ENCODE measurements at regions of chr2 and their contacts with region 1.

Region 1: GRCh38 chr2:86440631-86441391 is at the start of gene KDM3A:
- DNase-seq: peak; percentile 100
- H3K4me3 Mint-ChIP-seq: peak within 1 kb of the TSS; percentile 92
- H3K27ac Mint-ChIP-seq: peak within 1 kb of the TSS; percentile 100
- H3K4me1 Mint-ChIP-seq: peaks cover 37% of the 10 kb centered on the region
- H3K27me3 Mint-ChIP-seq: no peaks in the 10 kb centered on the region
- total RNA-seq, gene KDM3A: 47.3 to 49.9 TPM

Region 2: GRCh38 chr2:85595301-85596025 is 845.3 kb before region 1 on chr2 and contains the start of gene RNF181:
- CTCF ChIA-PET with region 1: no interaction called
- intact Hi-C with region 1: no loop called
- DNase-seq: peak; percentile 96
- H3K4me3 Mint-ChIP-seq: peak within 1 kb of the TSS; percentile 97
- H3K27ac Mint-ChIP-seq: peak within 1 kb of the TSS; percentile 92
- H3K4me1 Mint-ChIP-seq: peaks cover 31% of the 10 kb centered on the region
- H3K27me3 Mint-ChIP-seq: no peaks in the 10 kb centered on the region
- total RNA-seq, gene RNF181: 86.8 to 96.1 TPM

Region 3: DNA sequence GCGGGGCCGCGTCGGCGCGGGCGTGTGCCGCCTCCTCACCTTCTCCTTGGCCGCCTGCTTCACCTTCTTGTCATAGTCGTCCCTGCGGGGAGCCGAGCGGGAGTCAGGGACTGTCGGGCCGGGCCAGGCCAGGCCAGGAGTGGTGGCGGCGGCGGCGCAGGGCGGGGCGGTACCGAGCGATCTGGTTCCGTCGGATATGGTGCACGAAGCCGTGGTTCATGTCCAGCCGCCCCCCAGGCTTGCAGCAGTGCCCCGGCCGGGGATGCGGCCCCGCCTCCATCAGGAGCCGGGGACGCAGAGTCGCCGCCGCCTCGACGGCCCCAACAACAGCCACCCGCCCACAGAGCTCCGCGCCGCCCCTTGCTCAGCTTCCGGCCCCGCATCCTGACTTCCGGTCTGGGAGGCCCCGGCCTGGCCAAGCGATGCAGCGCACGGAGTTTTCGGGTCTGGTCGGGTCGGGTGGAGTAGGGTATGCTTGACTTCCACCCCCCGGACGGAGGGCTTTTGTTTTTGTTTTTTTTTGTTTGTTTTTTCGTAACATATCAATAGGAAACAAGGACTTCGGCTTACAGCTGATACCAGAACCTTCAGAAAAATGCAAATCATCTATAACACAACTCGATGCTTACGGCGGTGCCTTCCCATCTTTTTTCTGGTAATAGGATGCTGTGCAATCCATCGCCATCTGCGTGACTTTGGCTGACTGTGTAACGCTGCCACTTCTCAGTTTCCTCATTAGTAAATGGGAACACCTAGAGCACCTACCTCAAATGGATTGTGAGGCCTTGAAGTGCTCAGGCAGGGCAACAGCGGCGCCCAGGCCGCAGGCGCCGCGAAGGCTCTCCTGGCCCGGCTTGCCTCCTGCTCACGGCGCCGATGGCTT is 828.9 kb before region 1 on chr2 and contains the start of gene C2orf68:
- CTCF ChIA-PET with region 1: no interaction called
- intact Hi-C with region 1: loop called (anchors 10 kb)
- DNase-seq: peak; percentile 93
- H3K4me3 Mint-ChIP-seq: peak within 1 kb of the TSS; percentile 98
- H3K27ac Mint-ChIP-seq: peak within 1 kb of the TSS; percentile 94
- H3K4me1 Mint-ChIP-seq: peaks cover 25% of the 10 kb centered on the region
- H3K27me3 Mint-ChIP-seq: no peaks in the 10 kb centered on the region
- total RNA-seq, gene C2orf68: 29.3 to 31.0 TPM

Region 4: GRCh38 chr2:86105252-86105968 is 335.4 kb before region 1 on chr2 and contains the start of gene POLR1A:
- CTCF ChIA-PET with region 1: no interaction called
- intact Hi-C with region 1: loop called (anchors 1 kb)
- DNase-seq: peak; percentile 87
- H3K4me3 Mint-ChIP-seq: peak within 1 kb of the TSS; percentile 89
- H3K27ac Mint-ChIP-seq: peak within 1 kb of the TSS; percentile 99
- H3K4me1 Mint-ChIP-seq: peaks cover 57% of the 10 kb centered on the region
- H3K27me3 Mint-ChIP-seq: no peaks in the 10 kb centered on the region
- total RNA-seq, gene POLR1A: 25.3 to 27.1 TPM

Region 5: GRCh38 chr2:86368161-86368824 is 72.5 kb before region 1 on chr2:
- CTCF ChIA-PET with region 1: interaction called, 4 read pairs
- intact Hi-C with region 1: loop called (anchors 1 kb)
- DNase-seq: peak; percentile 46
- H3K4me3 Mint-ChIP-seq: peak overlapping the region; percentile 66
- H3K27ac Mint-ChIP-seq: peak overlapping the region; percentile 64
- H3K4me1 Mint-ChIP-seq: peaks cover 48% of the 10 kb centered on the region
- H3K27me3 Mint-ChIP-seq: no peaks in the 10 kb centered on the region

Region 6: DNA sequence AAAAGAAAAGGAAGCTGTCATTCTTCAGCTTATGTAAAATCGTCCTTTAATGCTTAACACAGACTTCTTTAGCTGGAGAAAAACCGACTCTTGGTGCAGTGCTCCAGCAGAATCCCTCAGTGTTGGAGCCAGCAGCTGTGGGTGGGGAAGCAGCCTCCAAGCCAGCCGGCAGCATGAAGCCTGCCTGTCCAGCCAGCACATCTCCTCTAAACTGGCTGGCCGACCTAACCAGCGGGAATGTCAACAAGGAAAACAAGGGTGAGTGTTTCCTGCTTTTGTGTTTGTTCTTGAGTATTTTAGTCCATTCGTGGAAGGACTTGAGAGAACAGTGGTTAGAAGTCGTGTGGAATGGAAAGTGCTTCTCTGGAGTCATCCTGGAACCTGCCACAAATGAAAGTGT is 39.3 kb after region 1 on chr2:
- CTCF ChIA-PET with region 1: no interaction called
- intact Hi-C with region 1: loop called (anchors 1 kb)
- DNase-seq: no peak
- H3K4me3 Mint-ChIP-seq: no peak overlapping the region
- H3K27ac Mint-ChIP-seq: no peak overlapping the region
- H3K4me1 Mint-ChIP-seq: peaks cover 50% of the 10 kb centered on the region
- H3K27me3 Mint-ChIP-seq: no peaks in the 10 kb centered on the region

Region 7: DNA sequence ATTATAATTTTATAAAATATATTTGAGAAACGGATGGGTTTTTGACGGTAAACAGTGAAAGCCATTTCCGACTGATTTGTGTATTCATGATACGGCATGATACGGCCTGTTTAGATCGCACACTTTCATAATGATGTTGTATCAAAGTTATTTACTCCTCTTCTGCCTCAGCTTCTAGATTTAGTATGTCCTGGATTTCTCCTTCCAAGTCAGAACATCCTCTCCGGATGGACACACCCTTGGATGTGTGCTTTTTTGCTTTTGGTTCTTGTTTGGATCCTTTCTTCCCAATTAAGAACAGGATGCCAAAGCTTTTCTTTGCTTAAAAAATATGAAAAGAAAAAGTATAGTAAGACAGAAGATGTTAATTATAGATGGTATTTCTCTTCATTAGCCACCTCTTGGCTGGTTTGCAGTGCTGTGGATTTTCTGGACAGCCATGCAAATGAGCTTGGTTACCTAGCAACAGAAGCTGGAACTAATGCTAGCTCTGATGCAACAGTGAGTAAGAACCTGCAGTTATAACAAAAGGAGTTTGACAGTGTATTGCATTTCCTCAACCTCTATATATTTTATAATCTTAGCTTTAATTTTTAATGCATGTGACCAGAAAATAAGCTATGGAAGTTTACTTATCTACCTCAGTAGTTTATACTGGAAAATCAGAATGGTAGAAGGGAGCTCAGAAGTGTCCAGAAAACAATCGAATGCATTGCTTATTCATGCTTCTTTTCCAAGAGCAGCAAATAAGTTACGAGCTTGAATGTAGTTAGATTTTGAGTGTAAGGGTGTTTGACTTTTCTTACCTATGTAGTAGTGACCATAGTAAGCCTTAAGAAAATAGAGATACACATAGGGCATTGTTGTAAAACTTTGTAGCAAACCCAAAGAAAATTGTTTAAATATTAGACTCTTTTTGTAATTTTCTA is 307.2 kb after region 1 on chr2:
- CTCF ChIA-PET with region 1: no interaction called
- intact Hi-C with region 1: loop called (anchors 10 kb)
- DNase-seq: peak; percentile 67
- H3K4me3 Mint-ChIP-seq: no peak overlapping the region
- H3K27ac Mint-ChIP-seq: peak overlapping the region; percentile 77
- H3K4me1 Mint-ChIP-seq: peaks cover 35% of the 10 kb centered on the region
- H3K27me3 Mint-ChIP-seq: no peaks in the 10 kb centered on the region

Measured in activated naive CD4-positive, alpha-beta T cell treated with anti-CD3 and anti-CD28 coated beads for 36 hours (primary cell).